ENCODE measurements at regions of chr19 and their contacts with region 1.

Region 1: GRCh38 chr19:16324384-16325160 is at the start of gene KLF2:
- DNase-seq: peak; percentile 94
- H3K4me3 ChIP-seq: peak within 1 kb of the TSS; percentile 71 to 93 (median 90)
- H3K27ac ChIP-seq: peak within 1 kb of the TSS; percentile 79
- H3K4me1 ChIP-seq: peaks cover 29% of the 10 kb centered on the region
- H3K27me3 ChIP-seq: no peaks in the 10 kb centered on the region
- CTCF ChIP-seq: no peak
- POLR2A ChIP-seq: peak; percentile 99
- total RNA-seq, gene KLF2: 23.4 and 37.7 TPM in 2 replicates

Region 2: GRCh38 chr19:16197622-16198369 is 126.8 kb before region 1 on chr19 and contains the start of gene AP1M1:
- CTCF ChIA-PET with region 1: no interaction called
- POLR2A ChIA-PET with region 1: no interaction called
- dilution Hi-C with region 1: no loop called
- intact Hi-C with region 1: loop called (anchors 5 kb)
- DNase-seq: peak; percentile 98
- H3K4me3 ChIP-seq: peak within 1 kb of the TSS; percentile 95 to 96 (median 95)
- H3K27ac ChIP-seq: peak within 1 kb of the TSS; percentile 81
- H3K4me1 ChIP-seq: peaks cover 21% of the 10 kb centered on the region
- H3K27me3 ChIP-seq: no peaks in the 10 kb centered on the region
- CTCF ChIP-seq: no peak
- POLR2A ChIP-seq: peak; percentile 88
- total RNA-seq, gene AP1M1: 114 and 129 TPM in 2 replicates

Region 3: DNA sequence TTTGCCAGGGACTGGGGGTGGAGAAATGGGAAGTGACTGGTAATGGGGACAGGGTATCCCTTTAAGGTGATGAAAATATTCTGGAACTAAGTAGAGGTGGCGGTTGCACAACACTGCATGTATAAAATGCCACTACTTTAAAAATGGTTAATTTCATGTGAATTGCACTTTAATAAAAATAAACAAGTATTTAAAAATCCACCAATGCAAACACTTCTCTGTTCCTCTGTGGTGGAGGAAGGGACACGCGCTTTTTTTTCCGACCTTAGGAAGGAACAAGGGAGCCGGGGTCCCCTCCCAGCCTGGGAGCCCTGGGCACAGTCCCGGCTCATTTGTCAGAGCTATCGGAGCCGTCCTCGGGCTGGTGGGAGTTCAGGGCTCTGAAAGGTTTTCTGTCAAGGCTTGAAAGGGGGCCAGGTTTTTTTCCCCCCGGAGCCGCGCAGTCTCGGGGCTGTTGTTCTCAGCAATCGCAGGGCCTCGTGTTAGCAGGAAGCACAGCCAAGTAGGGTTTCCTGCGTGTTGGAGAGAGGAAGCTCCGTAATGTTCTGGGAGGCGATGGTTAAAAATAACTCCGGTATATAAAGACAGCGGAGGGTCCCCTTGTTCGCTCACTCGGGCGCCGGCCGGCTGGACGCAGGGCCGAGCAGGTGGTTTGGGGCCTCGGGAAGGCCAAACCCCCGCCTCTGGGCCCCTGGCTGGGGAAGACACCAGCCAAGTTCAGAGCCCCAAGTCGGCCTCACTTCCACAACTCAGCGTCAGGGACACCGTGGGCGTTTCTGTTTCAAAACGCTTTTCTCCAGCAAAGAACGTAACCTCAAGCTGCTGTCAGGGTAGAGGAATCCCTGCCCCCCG is 41.1 kb before region 1 on chr19:
- CTCF ChIA-PET with region 1: interaction called, 11 read pairs
- POLR2A ChIA-PET with region 1: interaction called, 15 read pairs
- dilution Hi-C with region 1: no loop called
- intact Hi-C with region 1: loop called (anchors 1 kb)
- DNase-seq: peak; percentile 97
- H3K4me3 ChIP-seq: peak overlapping the region in 1 of 3 experiments; percentile 2
- H3K27ac ChIP-seq: peak overlapping the region; percentile 97
- H3K4me1 ChIP-seq: peaks cover 28% of the 10 kb centered on the region
- H3K27me3 ChIP-seq: no peaks in the 10 kb centered on the region
- CTCF ChIP-seq: no peak
- POLR2A ChIP-seq: peak; percentile 94

Region 4: DNA sequence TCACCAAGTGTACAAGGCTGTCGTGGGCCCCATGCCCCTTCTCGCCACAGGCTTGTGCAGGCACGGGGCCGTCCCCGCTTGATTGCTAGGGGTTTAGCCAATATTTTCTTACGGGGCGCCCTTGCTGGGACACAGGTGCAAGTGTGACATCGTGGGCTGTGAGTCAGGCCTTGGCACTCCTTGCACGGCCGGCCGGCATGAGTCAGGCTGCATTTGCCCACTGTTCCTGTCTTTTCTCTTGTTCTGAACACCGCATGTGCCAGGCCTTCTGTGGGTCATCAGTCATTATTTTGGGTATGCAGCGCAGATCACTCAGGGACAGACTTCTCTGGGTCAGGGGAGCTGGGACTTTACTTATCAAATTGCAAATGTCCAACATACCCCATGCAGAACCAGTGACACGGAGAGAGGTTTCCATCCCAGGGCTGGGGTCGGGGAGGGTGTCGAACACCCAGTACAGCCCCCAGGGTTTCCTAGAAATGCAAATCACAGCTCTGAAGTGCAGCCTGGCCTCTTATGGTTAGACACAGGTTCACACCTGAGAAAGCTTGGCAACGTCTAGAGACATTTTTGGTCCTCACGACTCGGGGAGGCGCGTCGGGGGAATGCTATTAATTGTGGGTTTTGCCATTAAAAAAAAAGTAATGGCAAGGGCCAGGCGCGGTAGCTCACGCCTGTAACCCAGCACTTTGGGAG is 22.4 kb before region 1 on chr19:
- CTCF ChIA-PET with region 1: no interaction called
- POLR2A ChIA-PET with region 1: interaction called, 3 read pairs
- dilution Hi-C with region 1: no loop called
- intact Hi-C with region 1: loop called (anchors 1 kb)
- DNase-seq: peak; percentile 70
- H3K4me3 ChIP-seq: no peak overlapping the region
- H3K27ac ChIP-seq: no peak overlapping the region
- H3K4me1 ChIP-seq: peaks cover 9% of the 10 kb centered on the region
- H3K27me3 ChIP-seq: no peaks in the 10 kb centered on the region
- CTCF ChIP-seq: no peak
- POLR2A ChIP-seq: no peak

Region 5: GRCh38 chr19:16509141-16510061 is 184.8 kb after region 1 on chr19:
- CTCF ChIA-PET with region 1: no interaction called
- POLR2A ChIA-PET with region 1: no interaction called
- dilution Hi-C with region 1: no loop called
- intact Hi-C with region 1: no loop called
- DNase-seq: no peak
- H3K4me3 ChIP-seq: no peak overlapping the region
- H3K27ac ChIP-seq: no peak overlapping the region
- H3K4me1 ChIP-seq: no peaks in the 10 kb centered on the region
- H3K27me3 ChIP-seq: no peaks in the 10 kb centered on the region
- CTCF ChIP-seq: no peak
- POLR2A ChIP-seq: no peak

Region 6: GRCh38 chr19:16703677-16704076 is 379.1 kb after region 1 on chr19:
- CTCF ChIA-PET with region 1: no interaction called
- POLR2A ChIA-PET with region 1: no interaction called
- dilution Hi-C with region 1: no loop called
- intact Hi-C with region 1: no loop called
- DNase-seq: no peak
- H3K4me3 ChIP-seq: no peak overlapping the region
- H3K27ac ChIP-seq: no peak overlapping the region
- H3K4me1 ChIP-seq: no peaks in the 10 kb centered on the region
- H3K27me3 ChIP-seq: no peaks in the 10 kb centered on the region
- CTCF ChIP-seq: no peak
- POLR2A ChIP-seq: no peak

Measured in endothelial cell of umbilical vein (primary cell).